ENCODE measurements at regions of chr17 and their contacts with region 1.

Region 1: GRCh38 chr17:51153210-51154072 is at the start of gene NME1:
- DNase-seq: peak; percentile 98
- H3K4me3 ChIP-seq: peak within 1 kb of the TSS; percentile 93
- CTCF ChIP-seq: peak; percentile 81

Region 2: DNA sequence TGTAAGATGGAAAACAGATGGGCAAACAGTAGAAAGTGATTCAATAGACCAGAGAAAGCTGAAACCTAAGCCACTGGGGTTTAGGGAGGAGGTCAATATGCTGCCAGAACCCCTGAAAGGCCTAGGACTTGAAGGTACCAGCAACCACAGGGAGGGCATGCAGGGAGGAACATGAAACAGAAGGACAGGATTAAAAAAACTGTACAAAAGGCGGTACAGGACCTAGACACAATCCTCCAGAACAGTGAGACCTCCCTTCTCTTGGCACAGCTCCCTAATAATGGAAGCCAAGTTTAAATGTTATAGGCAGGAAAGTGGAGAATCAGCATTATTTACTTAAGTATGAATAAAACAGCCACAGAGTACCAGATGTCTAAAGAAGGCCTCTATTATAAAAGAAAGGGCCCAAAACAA is 138.3 kb before region 1 on chr17:
- CTCF ChIA-PET with region 1: interaction called, 12 read pairs
- POLR2A ChIA-PET with region 1: no interaction called
- DNase-seq: no peak
- H3K4me3 ChIP-seq: no peak overlapping the region
- CTCF ChIP-seq: no peak

Region 3: GRCh38 chr17:51029568-51030463 is 123.6 kb before region 1 on chr17:
- CTCF ChIA-PET with region 1: interaction called, 10 read pairs
- POLR2A ChIA-PET with region 1: interaction called, 3 read pairs
- DNase-seq: no peak
- H3K4me3 ChIP-seq: no peak overlapping the region
- CTCF ChIP-seq: no peak

Region 4: DNA sequence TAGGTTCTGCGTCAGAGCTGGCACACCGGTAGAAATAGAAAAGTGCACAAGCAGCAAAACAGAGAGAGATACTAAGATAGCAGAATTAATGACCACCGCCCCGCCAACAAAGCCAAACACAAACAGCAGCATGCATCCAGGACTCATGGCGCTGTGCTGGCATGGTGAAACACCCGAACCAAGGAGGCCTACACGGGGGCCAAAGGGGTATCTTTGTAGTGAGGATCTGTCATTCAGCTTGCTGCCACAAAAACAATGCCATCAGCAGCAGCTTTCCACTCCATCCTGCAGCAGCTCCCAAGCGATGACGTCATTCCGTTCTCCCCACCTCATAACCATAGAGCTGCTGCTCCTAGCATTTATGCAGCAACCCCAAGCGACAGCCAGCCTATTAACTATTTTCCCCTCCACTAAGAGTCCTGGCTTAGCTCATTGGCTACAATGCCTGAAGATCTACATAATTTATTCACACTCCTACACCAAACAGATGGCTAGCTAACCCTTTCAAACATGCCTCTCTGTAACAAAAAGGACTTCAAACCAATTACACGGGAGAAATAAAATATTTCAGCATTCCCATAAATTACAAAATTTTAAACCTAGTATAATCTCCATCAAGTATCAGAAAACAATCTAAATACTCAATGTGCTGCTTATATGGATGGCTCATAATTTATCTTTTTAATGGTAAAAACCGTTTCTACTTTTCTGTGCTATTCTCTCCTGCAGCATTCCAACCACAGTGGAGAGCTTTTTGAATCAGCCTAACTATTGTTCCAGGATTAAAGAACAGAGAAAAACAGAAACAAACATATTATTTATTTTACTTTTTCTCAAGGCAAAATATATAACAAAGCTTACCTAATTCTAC is 106.7 kb before region 1 on chr17:
- CTCF ChIA-PET with region 1: interaction called, 15 read pairs
- POLR2A ChIA-PET with region 1: no interaction called
- DNase-seq: peak; percentile 70
- H3K4me3 ChIP-seq: peak overlapping the region; percentile 49
- CTCF ChIP-seq: no peak

Region 5: GRCh38 chr17:51056813-51057510 is 96.5 kb before region 1 on chr17:
- CTCF ChIA-PET with region 1: interaction called, 13 read pairs
- POLR2A ChIA-PET with region 1: interaction called, 3 read pairs
- DNase-seq: peak; percentile 91
- H3K4me3 ChIP-seq: no peak overlapping the region
- CTCF ChIP-seq: peak; percentile 49

Region 6: DNA sequence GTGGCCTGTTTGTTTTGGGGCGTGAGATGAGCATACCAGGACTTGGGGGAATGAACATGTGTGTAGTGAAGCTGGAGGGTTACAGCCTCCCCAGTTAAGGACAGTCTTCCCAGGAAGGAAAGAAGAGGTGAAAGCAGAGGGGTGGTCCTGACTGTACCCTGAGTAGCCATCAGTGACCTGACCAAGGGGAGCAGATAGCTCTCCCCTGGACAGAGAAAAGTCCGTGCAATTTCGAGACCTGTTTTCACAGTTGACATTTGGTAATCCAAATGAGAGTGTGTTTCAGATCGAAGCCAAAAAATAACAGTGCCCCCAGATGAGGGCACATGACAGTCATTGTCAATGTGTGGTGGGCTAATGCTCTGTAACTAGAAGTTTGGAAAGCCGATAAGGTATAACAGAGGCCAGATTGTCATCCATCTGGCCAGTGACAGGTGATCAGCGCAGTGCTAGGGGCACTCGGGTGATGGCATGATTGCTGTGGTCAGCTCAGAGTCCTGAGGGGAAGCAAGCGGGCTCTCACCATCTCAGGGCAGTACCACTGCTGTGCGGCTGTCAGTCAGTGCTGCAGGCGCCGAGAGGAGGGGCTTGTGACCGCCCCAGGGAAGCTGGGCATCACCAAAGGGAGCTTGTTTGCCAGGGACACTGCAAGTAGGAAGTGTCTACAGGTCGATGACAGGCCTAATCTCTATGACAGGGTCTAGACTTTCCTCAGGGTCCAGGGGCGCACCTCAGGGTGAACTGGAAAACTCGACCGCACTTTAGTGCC is 11.7 kb after region 1 on chr17:
- CTCF ChIA-PET with region 1: interaction called, 17 read pairs
- POLR2A ChIA-PET with region 1: interaction called, 6 read pairs
- DNase-seq: no peak
- H3K4me3 ChIP-seq: no peak overlapping the region
- CTCF ChIP-seq: no peak